G401 (cell line): ENCODE measurements at regions of chr17 and their contacts with region 1.

Region 1: GRCh38 chr17:1764284-1764683 is 2.4 kb downstream of the SERPINF1 start:
- DNase-seq: no peak

Region 2: GRCh38 chr17:1703063-1703462 is 61.2 kb before region 1 on chr17:
- in situ Hi-C with region 1: no loop called
- DNase-seq: no peak

Region 3: GRCh38 chr17:1716076-1716995 is 47.9 kb before region 1 on chr17:
- in situ Hi-C with region 1: loop called (anchors 5 kb)
- DNase-seq: peak; percentile 100

Region 4: GRCh38 chr17:1813088-1813487 is 48.8 kb after region 1 on chr17:
- in situ Hi-C with region 1: no loop called
- DNase-seq: no peak